Activated naive CD4-positive, alpha-beta T cell treated with anti-CD3 and anti-CD28 coated beads for 36 hours (primary cell): ENCODE measurements at regions of chr3 and their contacts with region 1.

Region 1: GRCh38 chr3:61111825-61112224 is 139.4 kb downstream of the FHIT start:
- DNase-seq: peak; percentile 29
- H3K4me3 Mint-ChIP-seq: no peak overlapping the region
- H3K27ac Mint-ChIP-seq: no peak overlapping the region
- H3K4me1 Mint-ChIP-seq: peaks cover 23% of the 10 kb centered on the region
- H3K27me3 Mint-ChIP-seq: no peaks in the 10 kb centered on the region

Region 2: DNA sequence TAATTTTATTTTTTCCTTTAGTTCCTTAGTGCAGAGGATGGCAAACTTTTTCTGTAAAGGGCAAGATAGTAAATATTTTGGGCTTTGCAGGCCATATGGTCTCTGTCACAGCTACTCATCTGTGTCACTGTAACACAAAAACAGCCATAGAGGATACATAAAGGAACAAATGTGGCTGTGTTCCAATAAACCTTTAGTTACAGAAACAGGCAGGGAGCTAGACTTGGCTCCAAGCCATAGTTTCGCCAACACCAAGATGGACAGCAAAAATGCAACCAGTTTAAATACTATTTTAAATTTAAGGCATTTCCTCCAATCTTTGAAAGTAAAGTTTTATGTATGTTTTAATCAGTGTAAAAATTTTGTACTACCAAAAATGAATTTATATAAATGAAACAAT is 613.9 kb before region 1 on chr3:
- CTCF ChIA-PET with region 1: no interaction called
- intact Hi-C with region 1: no loop called
- DNase-seq: no peak
- H3K4me3 Mint-ChIP-seq: no peak overlapping the region
- H3K27ac Mint-ChIP-seq: no peak overlapping the region
- H3K4me1 Mint-ChIP-seq: no peaks in the 10 kb centered on the region
- H3K27me3 Mint-ChIP-seq: no peaks in the 10 kb centered on the region

Region 3: DNA sequence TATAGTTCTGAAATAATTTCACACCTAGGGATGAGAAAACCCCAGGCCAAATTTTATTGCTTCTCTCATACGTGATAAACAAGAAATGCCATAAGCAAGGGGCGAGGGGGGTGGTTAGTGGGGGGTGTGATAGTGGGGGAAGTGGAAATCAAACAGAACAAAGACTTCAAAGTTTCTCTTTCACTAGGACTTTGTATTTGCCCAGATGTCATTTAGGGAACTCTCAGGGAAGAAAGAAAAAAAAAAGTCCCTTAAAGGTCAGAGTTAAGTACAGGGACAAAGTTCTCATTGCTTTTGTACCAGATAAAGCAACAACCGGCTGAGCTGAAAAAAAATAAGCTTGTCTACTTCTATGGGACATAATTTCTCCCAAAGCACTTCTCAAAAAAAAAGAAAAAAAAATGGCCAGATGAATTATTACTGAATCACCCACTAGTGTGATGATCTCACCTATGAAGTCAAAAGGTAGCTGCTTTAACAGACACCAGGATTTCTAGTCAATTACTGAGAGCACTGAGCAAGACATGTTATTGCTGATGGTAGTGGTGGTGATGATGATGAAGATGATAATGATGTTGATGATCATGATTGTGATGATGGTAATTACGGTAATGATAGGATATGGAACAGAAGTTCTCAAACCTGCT is 83.2 kb after region 1 on chr3:
- CTCF ChIA-PET with region 1: no interaction called
- intact Hi-C with region 1: no loop called
- DNase-seq: no peak
- H3K4me3 Mint-ChIP-seq: no peak overlapping the region
- H3K27ac Mint-ChIP-seq: no peak overlapping the region
- H3K4me1 Mint-ChIP-seq: no peaks in the 10 kb centered on the region
- H3K27me3 Mint-ChIP-seq: no peaks in the 10 kb centered on the region

Region 4: GRCh38 chr3:61251174-61251972 is 139.5 kb after region 1 on chr3 and contains the start of gene FHIT:
- CTCF ChIA-PET with region 1: no interaction called
- intact Hi-C with region 1: loop called (anchors 2 kb)
- DNase-seq: peak; percentile 96
- H3K4me3 Mint-ChIP-seq: peak within 1 kb of the TSS; percentile 91
- H3K27ac Mint-ChIP-seq: peak within 1 kb of the TSS; percentile 87
- H3K4me1 Mint-ChIP-seq: peaks cover 11% of the 10 kb centered on the region
- H3K27me3 Mint-ChIP-seq: peaks cover under 1% of the 10 kb centered on the region
- total RNA-seq, gene FHIT: 20.2 to 22.7 TPM